Naive thymus-derived CD4-positive, alpha-beta T cell (primary cell): ENCODE measurements at regions of chr4 and their contacts with region 1.

Region 1: GRCh38 chr4:143184217-143185116 is at the start of gene USP38:
- DNase-seq: peak; percentile 74 to 90 (median 85)
- ATAC-seq: peak; percentile 91
- H3K4me3 ChIP-seq: peak within 1 kb of the TSS; percentile 78
- H3K4me3 Mint-ChIP-seq: peak within 1 kb of the TSS; percentile 78 to 99 (median 94)
- H3K27ac ChIP-seq: peak within 1 kb of the TSS; percentile 96
- H3K27ac Mint-ChIP-seq: peak within 1 kb of the TSS; percentile 93 to 99 (median 97)
- H3K4me1 ChIP-seq: peaks cover 27% of the 10 kb centered on the region in 2 donors
- H3K4me1 Mint-ChIP-seq: peaks cover 41 to 82% (median 70%) of the 10 kb centered on the region in 7 donors
- H3K27me3 ChIP-seq: no peaks in the 10 kb centered on the region
- H3K27me3 Mint-ChIP-seq: no peaks in the 10 kb centered on the region
- total RNA-seq, gene USP38: 22.4 to 28.8 (median 24.3) TPM

Region 2: DNA sequence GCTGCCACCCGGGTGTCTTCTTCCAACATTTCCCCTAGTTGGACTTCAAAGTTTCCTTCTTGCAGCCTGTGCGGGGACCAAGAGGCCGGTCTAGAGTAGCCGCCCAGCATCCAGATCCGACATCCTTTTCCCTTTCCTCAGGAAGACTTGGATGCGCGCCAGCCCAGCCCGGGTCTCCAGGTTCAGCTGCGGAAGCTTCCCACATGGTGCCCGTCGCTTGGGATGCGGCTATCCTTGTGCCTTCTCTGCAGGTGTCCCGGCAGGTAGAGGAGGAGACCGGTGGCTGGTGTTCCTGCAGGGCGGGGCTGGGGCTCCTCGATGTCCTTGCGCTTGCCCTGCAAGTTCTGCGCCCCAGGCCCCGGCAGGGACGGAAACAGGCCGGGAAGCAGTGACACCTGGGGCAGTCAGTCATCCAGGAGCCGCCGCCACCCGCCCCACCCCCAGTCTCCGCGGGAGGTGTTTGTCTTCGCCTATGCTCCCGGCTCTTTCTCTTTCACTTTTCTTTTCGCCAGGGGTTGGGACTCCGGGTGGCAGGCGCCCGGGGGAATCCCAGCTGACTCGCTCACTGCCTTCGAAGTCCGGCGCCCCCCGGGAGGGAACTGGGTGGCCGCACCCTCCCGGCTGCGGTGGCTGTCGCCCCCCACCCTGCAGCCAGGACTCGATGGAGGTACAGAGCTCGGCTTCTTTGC is 1548.2 kb before region 1 on chr4 and contains the start of gene IL15:
- CTCF ChIA-PET with region 1: no interaction called
- POLR2A ChIA-PET with region 1: no interaction called
- intact Hi-C with region 1: loop called in 1 of 2 experiments (anchors 5 kb)
- DNase-seq: peak; percentile 4 to 70 (median 20)
- ATAC-seq: peak; percentile 82
- H3K4me3 ChIP-seq: peak within 1 kb of the TSS; percentile 80
- H3K4me3 Mint-ChIP-seq: peak within 1 kb of the TSS; percentile 80 to 98 (median 95)
- H3K27ac ChIP-seq: peak within 1 kb of the TSS; percentile 40
- H3K27ac Mint-ChIP-seq: peak within 1 kb of the TSS in 7 of 9 donors; percentile 7 to 85 (median 69)
- H3K4me1 ChIP-seq: peaks cover 2 to 10% of the 10 kb centered on the region in 2 donors
- H3K4me1 Mint-ChIP-seq: peaks cover 8 to 25% (median 16%) of the 10 kb centered on the region in 7 donors
- H3K27me3 ChIP-seq: no peaks in the 10 kb centered on the region
- H3K27me3 Mint-ChIP-seq: peaks cover 7 to 52% (median 14%) of the 10 kb centered on the region in 5 donors
- total RNA-seq, gene IL15: 0.54 to 8.7 (median 2.7) TPM

Region 3: GRCh38 chr4:142282870-142283431 is 901.5 kb before region 1 on chr4:
- CTCF ChIA-PET with region 1: no interaction called
- POLR2A ChIA-PET with region 1: no interaction called
- intact Hi-C with region 1: loop called in 1 of 2 experiments (anchors 10 kb)
- DNase-seq: peak in 7 of 9 donors; percentile 26 to 53 (median 38)
- ATAC-seq: peak; percentile 64
- H3K4me3 ChIP-seq: no peak overlapping the region
- H3K4me3 Mint-ChIP-seq: no peak overlapping the region
- H3K27ac ChIP-seq: no peak overlapping the region
- H3K27ac Mint-ChIP-seq: no peak overlapping the region
- H3K4me1 ChIP-seq: peaks cover 7 to 15% of the 10 kb centered on the region in 2 donors
- H3K4me1 Mint-ChIP-seq: peaks cover 9 to 35% (median 25%) of the 10 kb centered on the region in 7 donors
- H3K27me3 ChIP-seq: no peaks in the 10 kb centered on the region
- H3K27me3 Mint-ChIP-seq: no peaks in the 10 kb centered on the region

Region 4: DNA sequence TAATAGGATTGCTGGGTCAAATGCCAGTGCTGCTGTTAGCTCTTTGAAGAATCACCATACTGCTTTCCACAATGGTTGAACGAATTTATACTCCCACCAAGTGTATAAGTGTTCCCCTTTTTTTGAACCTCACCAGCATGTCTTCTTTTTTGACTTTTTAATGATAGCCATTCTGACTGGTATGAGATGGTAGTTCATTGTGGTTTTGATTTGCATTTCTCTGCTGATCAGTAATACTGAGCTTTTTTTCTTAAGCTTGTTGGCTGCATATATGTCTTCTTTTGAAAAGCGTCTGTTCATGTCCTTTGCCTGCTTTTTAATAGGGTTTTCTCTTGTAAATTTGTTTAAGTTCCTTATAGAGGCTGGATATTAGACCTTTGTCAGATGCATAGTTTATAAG is 15.0 kb after region 1 on chr4:
- CTCF ChIA-PET with region 1: no interaction called
- POLR2A ChIA-PET with region 1: no interaction called
- intact Hi-C with region 1: loop called in 1 of 2 experiments (anchors 2 kb)
- DNase-seq: no peak
- ATAC-seq: no peak
- H3K4me3 ChIP-seq: no peak overlapping the region
- H3K4me3 Mint-ChIP-seq: no peak overlapping the region
- H3K27ac ChIP-seq: no peak overlapping the region
- H3K27ac Mint-ChIP-seq: no peak overlapping the region
- H3K4me1 ChIP-seq: no peaks in the 10 kb centered on the region
- H3K4me1 Mint-ChIP-seq: peaks cover 9 to 45% (median 37%) of the 10 kb centered on the region in 7 donors
- H3K27me3 ChIP-seq: no peaks in the 10 kb centered on the region
- H3K27me3 Mint-ChIP-seq: no peaks in the 10 kb centered on the region

Region 5: GRCh38 chr4:143358923-143359643 is 174.6 kb after region 1 on chr4:
- CTCF ChIA-PET with region 1: no interaction called
- POLR2A ChIA-PET with region 1: no interaction called
- intact Hi-C with region 1: loop called (anchors 5 to 10 kb)
- DNase-seq: peak in 2 of 9 donors; percentile 20 to 30
- ATAC-seq: peak; percentile 83
- H3K4me3 ChIP-seq: peak overlapping the region; percentile 14
- H3K4me3 Mint-ChIP-seq: peak overlapping the region; percentile 52 to 72 (median 66)
- H3K27ac ChIP-seq: no peak overlapping the region
- H3K27ac Mint-ChIP-seq: peak overlapping the region in 8 of 9 donors; percentile 2 to 85 (median 46)
- H3K4me1 ChIP-seq: peaks cover 0 to 9% of the 10 kb centered on the region in 2 donors
- H3K4me1 Mint-ChIP-seq: peaks cover 14 to 21% (median 17%) of the 10 kb centered on the region in 7 donors
- H3K27me3 ChIP-seq: no peaks in the 10 kb centered on the region
- H3K27me3 Mint-ChIP-seq: peaks cover 0 to 5% (median 0%) of the 10 kb centered on the region in 5 donors

Region 6: GRCh38 chr4:143513306-143514168 is 329.1 kb after region 1 on chr4 and contains the start of gene SMARCA5:
- CTCF ChIA-PET with region 1: no interaction called
- POLR2A ChIA-PET with region 1: no interaction called
- intact Hi-C with region 1: loop called (anchors 1 kb)
- DNase-seq: peak; percentile 93 to 99 (median 98)
- ATAC-seq: peak; percentile 92
- H3K4me3 ChIP-seq: peak within 1 kb of the TSS; percentile 91
- H3K4me3 Mint-ChIP-seq: peak within 1 kb of the TSS; percentile 93 to 100 (median 98)
- H3K27ac ChIP-seq: peak within 1 kb of the TSS; percentile 98
- H3K27ac Mint-ChIP-seq: peak within 1 kb of the TSS; percentile 97 to 100 (median 100)
- H3K4me1 ChIP-seq: peaks cover 20 to 36% of the 10 kb centered on the region in 2 donors
- H3K4me1 Mint-ChIP-seq: peaks cover 22 to 54% (median 37%) of the 10 kb centered on the region in 7 donors
- H3K27me3 ChIP-seq: no peaks in the 10 kb centered on the region
- H3K27me3 Mint-ChIP-seq: peaks cover 0 to 30% (median 0%) of the 10 kb centered on the region in 5 donors
- total RNA-seq, gene SMARCA5: 48.3 to 58.2 (median 54.4) TPM

Region 7: DNA sequence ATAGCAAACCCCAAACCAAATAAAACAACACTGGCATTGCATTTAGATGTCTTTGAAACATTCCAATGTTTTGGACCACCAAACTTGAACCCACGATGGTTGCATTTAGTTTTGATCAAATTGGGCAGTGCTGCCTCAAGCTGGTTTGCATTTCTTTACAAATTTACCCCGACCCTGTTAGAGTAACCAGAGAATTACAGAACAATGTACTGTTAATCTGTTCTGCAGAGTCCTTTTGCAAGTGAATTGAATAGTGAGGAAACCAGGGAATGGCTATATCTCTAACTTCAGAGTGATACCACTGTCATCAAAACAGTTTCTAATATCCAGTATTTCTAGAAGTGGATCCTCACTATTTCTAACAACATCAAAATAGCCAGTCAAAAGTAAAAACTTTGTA is 1005.5 kb after region 1 on chr4:
- CTCF ChIA-PET with region 1: no interaction called
- POLR2A ChIA-PET with region 1: no interaction called
- intact Hi-C with region 1: no loop called
- DNase-seq: no peak
- ATAC-seq: no peak
- H3K4me3 ChIP-seq: no peak overlapping the region
- H3K4me3 Mint-ChIP-seq: no peak overlapping the region
- H3K27ac ChIP-seq: no peak overlapping the region
- H3K27ac Mint-ChIP-seq: no peak overlapping the region
- H3K4me1 ChIP-seq: no peaks in the 10 kb centered on the region
- H3K4me1 Mint-ChIP-seq: no peaks in the 10 kb centered on the region
- H3K27me3 ChIP-seq: no peaks in the 10 kb centered on the region
- H3K27me3 Mint-ChIP-seq: peaks cover 11 to 16% (median 14%) of the 10 kb centered on the region in 5 donors